Left ventricle myocardium superior (tissue), 1 donor: ENCODE measurements at regions of chr21 and their contacts with region 1.

Region 1: DNA sequence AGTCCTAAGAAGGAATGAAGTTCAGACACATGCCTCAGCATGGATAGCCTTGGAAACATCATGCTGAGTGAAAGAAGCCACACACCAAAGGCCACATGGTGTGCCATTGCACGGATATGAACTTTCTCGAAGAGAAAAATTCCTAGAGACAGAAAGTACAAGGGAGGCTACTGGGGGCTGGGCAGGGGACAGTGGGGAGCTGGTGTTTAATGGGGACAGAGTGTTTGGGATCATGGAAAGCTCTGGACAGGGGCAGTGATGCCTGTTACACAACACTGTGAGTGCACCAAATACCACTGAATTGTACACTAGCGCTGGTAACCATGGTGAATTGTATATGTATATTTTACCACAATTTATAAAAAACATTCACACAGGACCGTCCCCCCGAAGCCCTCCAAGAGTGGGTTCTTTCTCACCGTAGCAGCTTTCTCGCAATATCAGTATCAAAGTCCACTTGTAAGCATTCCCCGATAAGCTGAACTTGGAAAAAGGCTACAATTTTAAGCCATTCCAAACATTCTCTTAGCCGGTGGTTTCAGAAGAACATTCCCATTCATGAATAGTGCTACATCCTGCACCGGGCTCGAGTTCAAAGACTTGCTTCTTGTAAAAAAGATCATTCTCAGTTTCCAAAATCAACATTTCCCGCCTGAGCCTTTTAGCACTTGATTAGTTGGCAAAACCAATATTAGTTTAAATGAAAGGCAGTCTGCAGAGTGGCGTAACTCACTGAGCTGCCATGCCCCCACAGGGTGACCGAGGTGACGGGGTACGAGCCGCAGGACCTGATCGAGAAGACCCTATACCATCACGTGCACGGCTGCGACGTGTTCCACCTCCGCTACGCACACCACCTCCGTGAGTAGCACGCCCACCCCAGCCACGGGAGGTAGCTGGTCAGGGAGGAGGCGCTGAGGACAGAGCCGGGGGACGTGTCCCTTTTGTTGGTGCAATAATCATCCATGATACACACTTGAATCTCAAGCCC is 31.7 kb downstream of the SIM2 start:
- DNase-seq: no peak
- ATAC-seq: no peak

Region 2: GRCh38 chr21:36671836-36672235 is 58.8 kb before region 1 on chr21:
- intact Hi-C with region 1: loop called (anchors 5 kb)
- DNase-seq: no peak
- ATAC-seq: no peak